Heart right ventricle (tissue), 16 donors: ENCODE measurements at regions of chr1 and their contacts with region 1.

Region 1: DNA sequence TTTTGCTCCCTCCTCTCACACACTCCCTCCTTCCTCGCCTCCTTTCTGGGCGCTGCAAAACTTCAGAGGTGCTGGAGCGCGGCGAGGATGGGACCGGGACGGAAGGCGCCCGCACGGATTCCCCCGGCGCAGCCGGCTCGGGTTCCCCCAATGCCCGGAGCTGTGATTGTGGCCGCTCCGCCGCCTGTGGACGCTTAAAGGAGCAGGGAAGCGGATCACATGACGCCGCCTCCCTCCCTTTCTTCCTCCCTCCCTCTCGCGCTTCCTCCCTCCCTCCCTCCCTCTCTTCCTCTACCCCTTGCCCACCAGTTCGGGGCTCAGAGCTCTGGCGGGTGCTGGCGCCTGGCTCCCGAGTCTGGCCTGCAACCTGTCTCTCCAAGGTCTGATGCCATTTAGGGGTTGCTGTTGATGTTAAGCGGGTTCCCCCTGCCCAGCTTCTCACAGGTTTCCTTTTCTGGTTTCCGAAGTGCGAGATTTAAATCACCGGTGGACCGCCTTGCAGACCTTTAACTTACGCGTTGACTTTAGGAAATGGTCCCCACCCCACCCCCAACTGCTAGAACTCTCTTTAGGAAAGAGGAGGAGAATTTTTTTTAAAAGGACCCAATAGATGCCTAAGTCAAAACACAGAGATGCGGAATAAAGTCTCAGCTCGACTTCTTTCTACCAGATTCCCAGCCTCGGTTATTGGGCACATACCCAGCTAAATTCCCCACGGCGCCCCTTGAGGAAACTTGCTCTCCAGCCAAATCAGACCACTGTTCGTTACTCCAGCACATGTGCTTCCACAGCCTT is at the start of gene WLS:
- DNase-seq: peak; percentile 79 to 83
- ATAC-seq: peak; percentile 87 to 91 (median 90)
- H3K4me3 ChIP-seq: peak within 1 kb of the TSS; percentile 70 to 91 (median 82)
- H3K27ac ChIP-seq: peak within 1 kb of the TSS; percentile 41 to 89 (median 87)
- H3K4me1 ChIP-seq: peaks cover 0 to 39% (median 27%) of the 10 kb centered on the region in 9 donors
- H3K27me3 ChIP-seq: peaks cover 0 to 12% (median 0%) of the 10 kb centered on the region in 7 donors
- CTCF ChIP-seq: peak in 5 of 9 donors; percentile 7 to 36 (median 25)
- total RNA-seq, gene WLS: 82.3 to 123 (median 109) TPM

Region 2: DNA sequence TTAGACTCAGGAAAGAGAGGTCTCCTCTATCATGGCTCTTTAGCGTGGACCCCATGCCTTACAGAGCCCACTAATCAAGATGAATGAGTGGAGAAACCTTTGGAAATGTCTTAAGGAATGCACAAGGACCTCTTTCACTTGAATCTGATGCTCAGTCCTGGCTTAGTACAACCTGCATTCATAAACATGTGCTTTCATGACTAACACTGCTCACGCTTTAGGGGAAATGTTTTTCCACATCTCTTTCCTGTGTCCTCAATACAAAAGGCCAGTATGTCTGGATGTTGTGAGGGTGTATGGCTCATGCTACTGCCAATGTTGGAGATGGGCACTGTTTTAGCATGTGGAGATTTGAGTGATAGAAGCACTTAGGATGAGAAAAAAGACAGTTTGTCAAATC is 385.1 kb before region 1 on chr1:
- intact Hi-C with region 1: loop called in 1 of 10 experiments (anchors 5 kb)
- DNase-seq: no peak
- ATAC-seq: no peak
- H3K4me3 ChIP-seq: no peak overlapping the region
- H3K27ac ChIP-seq: no peak overlapping the region
- H3K4me1 ChIP-seq: peaks cover 0 to 12% (median 9%) of the 10 kb centered on the region in 9 donors
- H3K27me3 ChIP-seq: no peaks in the 10 kb centered on the region
- CTCF ChIP-seq: no peak

Region 3: GRCh38 chr1:68149907-68150306 is 82.6 kb before region 1 on chr1:
- intact Hi-C with region 1: loop called in 5 of 10 experiments (anchors 5 to 10 kb)
- DNase-seq: no peak
- ATAC-seq: peak in 4 of 8 donors; percentile 16 to 56 (median 46)
- H3K4me3 ChIP-seq: no peak overlapping the region
- H3K27ac ChIP-seq: peak overlapping the region in 8 of 10 donors; percentile 10 to 76 (median 42)
- H3K4me1 ChIP-seq: peaks cover 0 to 30% (median 14%) of the 10 kb centered on the region in 9 donors
- H3K27me3 ChIP-seq: no peaks in the 10 kb centered on the region
- CTCF ChIP-seq: no peak

Region 4: DNA sequence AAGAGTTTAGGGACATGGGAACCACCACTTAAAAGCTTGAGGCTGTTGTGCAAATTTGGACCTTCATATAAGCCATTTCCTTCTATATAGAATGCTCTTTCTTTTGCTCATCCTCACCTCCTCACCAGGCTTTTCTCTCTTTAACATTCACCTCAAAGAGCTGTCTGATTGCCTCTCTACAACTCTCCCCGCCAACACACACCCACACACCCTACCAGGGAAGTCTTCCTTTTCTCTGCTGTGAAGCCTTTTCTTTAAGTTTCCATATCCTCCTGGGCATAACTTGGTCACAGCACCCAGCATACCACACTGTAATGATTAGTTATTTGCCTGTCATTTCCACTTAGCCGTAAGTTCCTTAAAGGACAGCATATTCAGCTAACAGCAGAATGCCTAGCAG is 40.8 kb before region 1 on chr1:
- intact Hi-C with region 1: loop called in 1 of 10 experiments (anchors 5 kb)
- DNase-seq: no peak
- ATAC-seq: no peak
- H3K4me3 ChIP-seq: no peak overlapping the region
- H3K27ac ChIP-seq: no peak overlapping the region
- H3K4me1 ChIP-seq: peaks cover 0 to 9% (median 3%) of the 10 kb centered on the region in 9 donors
- H3K27me3 ChIP-seq: no peaks in the 10 kb centered on the region
- CTCF ChIP-seq: no peak

Region 5: GRCh38 chr1:68313735-68314134 is 81.2 kb after region 1 on chr1:
- intact Hi-C with region 1: loop called in 1 of 10 experiments (anchors 10 kb)
- DNase-seq: no peak
- ATAC-seq: no peak
- H3K4me3 ChIP-seq: no peak overlapping the region
- H3K27ac ChIP-seq: no peak overlapping the region
- H3K4me1 ChIP-seq: peaks cover 0 to 11% (median 0%) of the 10 kb centered on the region in 9 donors
- H3K27me3 ChIP-seq: no peaks in the 10 kb centered on the region
- CTCF ChIP-seq: no peak

Region 6: GRCh38 chr1:68346188-68346808 is 113.7 kb after region 1 on chr1:
- intact Hi-C with region 1: loop called in 1 of 10 experiments (anchors 5 kb)
- DNase-seq: no peak
- ATAC-seq: no peak
- H3K4me3 ChIP-seq: no peak overlapping the region
- H3K27ac ChIP-seq: no peak overlapping the region
- H3K4me1 ChIP-seq: peaks cover 0 to 7% (median 0%) of the 10 kb centered on the region in 9 donors
- H3K27me3 ChIP-seq: no peaks in the 10 kb centered on the region
- CTCF ChIP-seq: peak in 8 of 9 donors; percentile 30 to 68 (median 55)

Region 7: GRCh38 chr1:68361346-68361910 is 128.9 kb after region 1 on chr1:
- intact Hi-C with region 1: no loop called
- DNase-seq: no peak
- ATAC-seq: no peak
- H3K4me3 ChIP-seq: no peak overlapping the region
- H3K27ac ChIP-seq: no peak overlapping the region
- H3K4me1 ChIP-seq: peaks cover 0 to 27% (median 10%) of the 10 kb centered on the region in 9 donors
- H3K27me3 ChIP-seq: no peaks in the 10 kb centered on the region
- CTCF ChIP-seq: no peak